ENCODE measurements at regions of chr7 and their contacts with region 1.

Region 1: DNA sequence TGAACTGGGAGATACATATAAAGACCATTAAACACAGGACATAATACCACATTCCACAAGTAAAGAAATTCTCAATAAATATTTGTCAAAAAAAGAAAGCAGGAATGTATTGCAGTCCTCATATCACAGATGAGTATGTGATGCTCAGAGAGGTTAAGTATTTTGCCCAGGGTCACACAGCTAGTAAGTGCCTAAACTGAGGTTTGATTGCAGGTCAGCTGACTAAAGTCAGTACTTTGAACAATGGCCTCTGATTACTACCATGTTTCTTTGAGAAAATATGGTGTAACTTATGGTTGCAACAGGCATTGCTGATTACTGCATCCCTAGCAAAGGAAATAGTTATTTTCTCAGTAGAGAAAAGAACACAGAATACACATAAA is 267.1 kb downstream of the ELMO1 start:
- DNase-seq: no peak
- H3K4me3 ChIP-seq: no peak overlapping the region
- H3K27ac ChIP-seq: no peak overlapping the region
- H3K4me1 ChIP-seq: no peaks in the 10 kb centered on the region
- H3K27me3 ChIP-seq: no peaks in the 10 kb centered on the region
- CTCF ChIP-seq: no peak

Region 2: DNA sequence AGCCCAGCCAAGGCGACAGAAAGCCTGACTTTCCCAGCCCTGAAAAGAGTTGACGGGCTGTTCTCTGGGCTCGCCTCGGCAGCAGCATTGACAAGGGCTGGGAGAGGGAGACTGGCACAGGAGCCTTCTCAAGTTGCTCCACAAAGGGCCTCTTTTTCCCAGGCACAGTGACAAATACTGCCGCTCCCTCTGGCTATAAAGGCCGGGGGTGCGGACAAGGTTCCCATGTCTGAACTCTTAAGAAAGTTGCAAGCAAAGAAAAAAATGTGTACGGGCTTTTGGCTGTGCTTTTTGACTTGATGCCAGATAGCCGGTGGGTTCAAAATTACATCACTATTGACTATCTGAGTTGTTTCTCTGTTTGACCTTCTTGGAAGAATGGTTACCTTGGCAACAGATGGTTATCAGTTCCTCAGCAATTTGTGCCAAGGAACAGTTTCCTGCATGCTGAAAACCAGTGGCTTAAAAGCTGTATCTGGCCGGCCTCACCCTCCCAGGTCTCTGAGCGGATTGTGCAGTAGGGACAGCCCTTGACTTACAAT is 1144.3 kb before region 1 on chr7:
- intact Hi-C with region 1: no loop called
- DNase-seq: peak; percentile 34
- H3K4me3 ChIP-seq: no peak overlapping the region
- H3K27ac ChIP-seq: no peak overlapping the region
- H3K4me1 ChIP-seq: no peaks in the 10 kb centered on the region
- H3K27me3 ChIP-seq: no peaks in the 10 kb centered on the region
- CTCF ChIP-seq: no peak

Region 3: DNA sequence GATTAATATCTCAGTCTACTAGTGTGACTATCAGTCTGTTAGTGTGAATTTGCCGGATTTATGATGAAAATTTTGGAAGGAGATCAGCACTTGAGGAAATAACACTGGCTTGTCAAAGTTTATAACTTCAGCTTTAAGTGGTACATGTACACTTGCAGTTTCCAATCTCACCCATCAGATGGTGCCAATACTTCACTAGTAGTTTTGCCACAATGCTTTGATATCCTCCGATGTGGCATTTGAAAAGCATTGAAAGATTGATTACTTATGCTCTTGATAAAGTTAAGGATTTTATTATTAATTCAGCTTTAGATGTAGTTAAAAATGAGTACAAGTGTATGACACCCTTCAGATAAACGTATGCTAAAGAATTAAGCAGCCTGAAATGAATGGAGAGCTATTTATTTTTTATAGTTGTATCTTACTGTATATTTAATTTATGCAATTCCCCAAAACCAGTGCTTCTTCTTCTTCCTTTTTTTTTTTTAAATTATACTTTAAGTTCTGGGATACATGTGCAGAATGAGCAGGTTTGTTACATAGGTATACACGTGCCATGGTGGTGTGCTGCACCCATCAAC is 693.7 kb before region 1 on chr7:
- intact Hi-C with region 1: loop called (anchors 5 kb)
- DNase-seq: peak; percentile 35
- H3K4me3 ChIP-seq: no peak overlapping the region
- H3K27ac ChIP-seq: no peak overlapping the region
- H3K4me1 ChIP-seq: no peaks in the 10 kb centered on the region
- H3K27me3 ChIP-seq: no peaks in the 10 kb centered on the region
- CTCF ChIP-seq: peak; percentile 59

Region 4: GRCh38 chr7:36670585-36671431 is 510.7 kb before region 1 on chr7:
- intact Hi-C with region 1: loop called (anchors 10 kb)
- DNase-seq: peak; percentile 82
- H3K4me3 ChIP-seq: no peak overlapping the region
- H3K27ac ChIP-seq: no peak overlapping the region
- H3K4me1 ChIP-seq: no peaks in the 10 kb centered on the region
- H3K27me3 ChIP-seq: no peaks in the 10 kb centered on the region
- CTCF ChIP-seq: peak; percentile 87

Region 5: DNA sequence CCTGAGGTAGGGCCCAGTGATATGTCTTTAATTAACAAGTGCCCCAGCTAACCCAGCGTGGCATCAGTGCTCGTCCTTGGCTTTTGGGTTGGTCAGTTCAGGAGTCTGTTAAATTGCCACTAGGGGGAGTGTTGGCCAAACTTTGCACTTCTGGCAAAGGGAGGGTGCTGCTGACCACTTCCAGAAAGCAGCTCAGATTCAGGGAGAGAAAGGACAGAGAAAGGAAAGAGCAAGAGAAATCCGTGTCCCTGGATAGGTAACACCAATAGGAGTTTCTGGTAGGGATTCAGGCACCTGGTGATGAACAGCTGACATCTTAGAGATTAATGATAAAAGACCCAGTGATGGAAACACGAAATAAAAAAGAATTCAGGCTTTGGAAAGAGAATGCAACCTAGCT is 214.2 kb before region 1 on chr7:
- intact Hi-C with region 1: loop called (anchors 2 kb)
- DNase-seq: peak; percentile 56
- H3K4me3 ChIP-seq: no peak overlapping the region
- H3K27ac ChIP-seq: no peak overlapping the region
- H3K4me1 ChIP-seq: no peaks in the 10 kb centered on the region
- H3K27me3 ChIP-seq: no peaks in the 10 kb centered on the region
- CTCF ChIP-seq: peak; percentile 74

Region 6: GRCh38 chr7:36986429-36987362 is 194.8 kb before region 1 on chr7:
- intact Hi-C with region 1: loop called (anchors 5 kb)
- DNase-seq: peak; percentile 67
- H3K4me3 ChIP-seq: no peak overlapping the region
- H3K27ac ChIP-seq: no peak overlapping the region
- H3K4me1 ChIP-seq: no peaks in the 10 kb centered on the region
- H3K27me3 ChIP-seq: no peaks in the 10 kb centered on the region
- CTCF ChIP-seq: peak; percentile 56